ENCODE measurements at regions of chr1 and their contacts with region 1.

Region 1: DNA sequence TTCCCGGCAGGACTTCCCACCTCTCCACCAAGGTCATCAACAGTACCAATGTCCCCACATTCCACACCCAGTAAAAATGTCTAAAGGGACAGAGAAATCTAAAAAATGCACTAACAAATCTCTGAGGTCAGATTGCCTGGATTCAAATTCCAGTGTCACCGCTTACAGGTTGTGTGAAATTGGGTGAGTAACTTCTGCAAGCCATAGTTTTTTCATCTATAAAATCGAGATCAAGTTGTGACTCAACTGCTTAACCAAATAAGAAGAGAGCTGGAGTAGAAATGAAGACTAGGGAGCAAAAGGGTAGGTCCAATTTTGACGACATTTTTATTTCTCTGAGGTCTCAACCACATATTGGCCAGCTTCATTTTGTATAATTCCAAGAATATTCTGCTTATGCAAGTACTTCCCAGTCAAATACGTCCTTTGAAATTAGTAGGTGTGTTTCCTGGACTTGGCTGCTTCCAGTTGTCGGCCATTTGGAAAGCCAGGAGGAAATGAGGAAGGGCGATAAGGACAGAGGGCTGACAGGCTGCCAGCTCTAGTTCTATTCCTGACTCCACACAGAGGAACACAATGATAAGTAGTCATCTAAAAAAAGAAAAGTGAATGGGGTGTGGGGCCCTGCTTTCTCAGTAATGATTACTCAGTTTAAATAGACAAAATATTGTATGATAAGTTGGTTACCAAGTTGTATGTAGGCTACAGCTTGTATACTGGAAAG is 57.7 kb upstream of the ZC3H11B start:
- DNase-seq: peak in 1 of 5 donors; percentile 30
- H3K4me3 ChIP-seq: no peak overlapping the region
- H3K27ac ChIP-seq: no peak overlapping the region
- H3K4me1 ChIP-seq: no peaks in the 10 kb centered on the region
- H3K27me3 ChIP-seq: no peaks in the 10 kb centered on the region
- CTCF ChIP-seq: no peak
- EP300 ChIP-seq: no peak
- POLR2A ChIP-seq: no peak

Region 2: DNA sequence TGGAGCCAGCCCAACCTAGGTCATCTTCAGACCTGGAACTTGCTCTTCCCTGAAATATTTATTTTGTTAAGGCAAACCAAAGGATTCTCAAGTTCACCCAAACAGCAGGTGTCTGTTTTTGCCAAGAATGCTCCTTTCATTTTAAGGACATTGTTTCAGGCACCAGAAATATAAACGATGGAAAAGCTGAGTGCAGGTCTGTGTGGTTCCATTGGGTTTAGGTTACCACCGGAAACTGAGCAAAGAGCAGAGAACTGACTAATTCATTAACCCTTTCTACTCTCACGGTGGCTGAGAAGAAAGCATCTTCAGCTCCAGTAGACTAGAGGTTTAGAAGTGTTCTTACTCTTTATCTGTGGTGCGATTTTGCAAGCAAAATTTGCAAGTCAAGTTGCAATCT is 19.7 kb before region 1 on chr1:
- intact Hi-C with region 1: loop called in 1 of 4 experiments (anchors 1 kb)
- DNase-seq: no peak
- H3K4me3 ChIP-seq: no peak overlapping the region
- H3K27ac ChIP-seq: no peak overlapping the region
- H3K4me1 ChIP-seq: no peaks in the 10 kb centered on the region
- H3K27me3 ChIP-seq: no peaks in the 10 kb centered on the region
- CTCF ChIP-seq: no peak
- EP300 ChIP-seq: no peak
- POLR2A ChIP-seq: no peak

Measured in ovary (tissue), 10 donors.